AG04449 (cell line): ENCODE measurements at regions of chr3 and their contacts with region 1.

Region 1: DNA sequence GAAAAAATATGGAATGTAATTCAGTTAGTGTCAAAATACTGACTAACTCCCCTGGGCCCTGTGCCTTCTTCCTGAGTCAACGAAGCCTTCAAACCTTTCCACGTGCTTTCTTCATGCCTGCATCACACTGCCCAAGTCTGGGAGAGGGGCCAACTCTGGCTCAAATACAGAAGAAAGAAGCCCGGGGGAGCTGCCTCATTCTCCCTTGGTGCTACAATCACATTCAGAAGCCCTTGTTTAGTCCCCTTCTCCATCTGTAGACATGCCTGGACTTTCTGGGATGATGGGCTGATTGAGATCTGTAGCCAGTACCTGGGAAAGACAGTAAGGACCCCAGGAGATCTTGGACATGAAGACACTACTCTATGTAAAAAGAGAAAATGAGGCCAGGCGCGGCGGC is 77.8 kb upstream of the GSK3B start:
- DNase-seq: no peak
- H3K4me3 ChIP-seq: no peak overlapping the region
- CTCF ChIP-seq: no peak

Region 2: GRCh38 chr3:120160050-120160449 is 12.0 kb before region 1 on chr3:
- CTCF ChIA-PET with region 1: interaction called, 17 read pairs
- POLR2A ChIA-PET with region 1: interaction called, 3 read pairs
- DNase-seq: peak; percentile 99
- H3K4me3 ChIP-seq: no peak overlapping the region
- CTCF ChIP-seq: no peak

Region 3: DNA sequence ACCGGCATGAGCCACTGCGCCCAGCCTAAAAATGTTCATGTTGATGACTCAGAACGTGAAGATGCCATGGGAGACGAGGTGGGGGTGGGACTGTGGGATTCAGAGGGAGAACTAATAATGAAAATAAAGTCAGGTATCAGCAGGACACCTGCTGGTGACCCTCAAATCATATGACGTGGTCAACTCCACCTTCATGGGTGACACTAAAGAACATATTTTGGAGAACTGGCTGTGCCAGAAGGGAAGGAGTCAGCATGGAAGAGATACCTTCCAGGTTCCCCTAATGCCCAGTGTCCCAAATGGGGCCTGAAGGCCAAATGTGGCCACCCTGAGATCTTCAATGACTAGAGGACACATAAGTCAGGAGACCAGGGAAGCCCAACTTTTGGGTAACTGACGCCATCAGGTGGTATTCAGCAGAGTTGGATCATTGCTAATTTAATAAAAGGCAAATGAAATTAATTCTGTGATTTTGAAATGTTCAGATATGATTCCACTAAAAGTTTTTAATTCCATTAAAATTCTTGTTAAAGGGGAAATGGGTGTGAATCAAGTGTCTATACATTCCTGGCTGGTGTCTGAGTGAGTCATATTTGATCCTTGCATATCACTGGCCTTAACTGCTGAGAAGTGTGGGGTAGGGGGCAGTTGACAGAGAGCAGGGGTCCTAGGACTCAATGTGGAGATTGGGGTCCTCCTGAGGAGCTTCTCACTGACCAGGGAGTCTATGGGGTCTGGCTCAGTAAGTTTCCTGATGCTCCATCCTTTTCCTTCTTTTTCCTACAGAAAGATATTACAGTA is 10.9 kb after region 1 on chr3:
- CTCF ChIA-PET with region 1: interaction called, 12 read pairs
- POLR2A ChIA-PET with region 1: no interaction called
- DNase-seq: no peak
- H3K4me3 ChIP-seq: no peak overlapping the region
- CTCF ChIP-seq: peak; percentile 34